ENCODE measurements at regions of chr11 and their contacts with region 1.

Region 1: DNA sequence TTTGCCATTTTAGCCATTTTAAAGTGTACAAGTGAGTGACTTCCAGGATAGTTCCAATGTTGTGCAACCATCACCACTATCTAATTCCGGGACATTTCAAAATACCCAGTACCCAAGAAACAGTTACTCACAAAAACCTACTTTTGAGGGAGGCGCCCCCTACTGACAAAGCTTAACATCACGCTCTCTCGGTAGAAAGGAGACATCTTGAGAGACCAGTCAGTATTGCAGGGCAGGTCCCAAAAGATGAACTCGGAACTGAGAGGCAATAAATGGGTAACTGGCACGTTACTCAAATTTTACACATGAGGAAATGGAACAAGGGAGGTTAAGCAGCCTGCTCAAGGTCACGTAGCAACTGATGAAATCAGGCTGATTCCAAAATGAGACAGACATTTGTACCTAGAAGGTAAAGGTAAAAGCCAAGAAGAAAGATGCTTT is 50.0 kb upstream of the POU2AF1 start:
- DNase-seq: peak; percentile 86
- ATAC-seq: peak; percentile 88
- H3K4me3 Mint-ChIP-seq: no peak overlapping the region
- H3K27ac Mint-ChIP-seq: no peak overlapping the region
- H3K4me1 Mint-ChIP-seq: no peaks in the 10 kb centered on the region
- H3K27me3 Mint-ChIP-seq: no peaks in the 10 kb centered on the region

Region 2: DNA sequence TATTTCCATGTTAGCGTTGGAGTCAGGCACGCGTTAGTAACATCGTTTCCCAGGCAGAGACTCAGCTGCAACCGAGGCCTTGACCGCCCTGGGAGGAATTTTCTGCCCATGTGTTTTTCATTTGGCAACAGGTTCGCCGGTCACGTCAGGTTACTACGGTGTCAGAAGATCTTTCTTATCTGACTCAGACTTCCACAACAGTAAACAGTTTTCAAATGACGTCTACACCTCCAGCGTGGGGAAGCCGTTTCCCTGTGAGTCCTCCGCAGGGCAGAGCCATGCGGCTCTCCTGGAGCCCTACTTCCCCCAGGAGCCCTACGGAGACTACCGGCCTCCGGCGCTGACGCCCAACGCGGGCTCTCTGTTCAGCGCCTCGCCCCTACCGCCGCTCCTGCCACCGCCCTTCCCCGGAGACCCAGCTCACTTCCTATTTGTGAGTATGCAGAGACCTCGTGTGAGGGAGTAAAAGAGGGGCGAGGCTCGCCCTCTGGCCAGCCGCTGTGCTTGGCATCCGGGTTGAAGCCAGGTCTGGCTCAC is 145.1 kb before region 1 on chr11:
- CTCF ChIA-PET with region 1: interaction called, 322 read pairs
- POLR2A ChIA-PET with region 1: no interaction called
- intact Hi-C with region 1: loop called (anchors 1 kb)
- DNase-seq: no peak
- ATAC-seq: no peak
- H3K4me3 Mint-ChIP-seq: no peak overlapping the region
- H3K27ac Mint-ChIP-seq: no peak overlapping the region
- H3K4me1 Mint-ChIP-seq: peaks cover 3% of the 10 kb centered on the region
- H3K27me3 Mint-ChIP-seq: no peaks in the 10 kb centered on the region

Region 3: GRCh38 chr11:111299101-111300026 is 129.7 kb before region 1 on chr11:
- CTCF ChIA-PET with region 1: interaction called, 13 read pairs
- POLR2A ChIA-PET with region 1: no interaction called
- intact Hi-C with region 1: no loop called
- DNase-seq: peak; percentile 11
- ATAC-seq: peak; percentile 42
- H3K4me3 Mint-ChIP-seq: no peak overlapping the region
- H3K27ac Mint-ChIP-seq: no peak overlapping the region
- H3K4me1 Mint-ChIP-seq: peaks cover 3% of the 10 kb centered on the region
- H3K27me3 Mint-ChIP-seq: peaks cover 34% of the 10 kb centered on the region

Region 4: GRCh38 chr11:111359223-111360149 is 69.6 kb before region 1 on chr11:
- CTCF ChIA-PET with region 1: interaction called, 17 read pairs
- POLR2A ChIA-PET with region 1: no interaction called
- intact Hi-C with region 1: loop called in 1 of 2 experiments (anchors 1 kb)
- DNase-seq: peak; percentile 39
- ATAC-seq: peak; percentile 83
- H3K4me3 Mint-ChIP-seq: no peak overlapping the region
- H3K27ac Mint-ChIP-seq: no peak overlapping the region
- H3K4me1 Mint-ChIP-seq: peaks cover 2% of the 10 kb centered on the region
- H3K27me3 Mint-ChIP-seq: no peaks in the 10 kb centered on the region

Region 5: DNA sequence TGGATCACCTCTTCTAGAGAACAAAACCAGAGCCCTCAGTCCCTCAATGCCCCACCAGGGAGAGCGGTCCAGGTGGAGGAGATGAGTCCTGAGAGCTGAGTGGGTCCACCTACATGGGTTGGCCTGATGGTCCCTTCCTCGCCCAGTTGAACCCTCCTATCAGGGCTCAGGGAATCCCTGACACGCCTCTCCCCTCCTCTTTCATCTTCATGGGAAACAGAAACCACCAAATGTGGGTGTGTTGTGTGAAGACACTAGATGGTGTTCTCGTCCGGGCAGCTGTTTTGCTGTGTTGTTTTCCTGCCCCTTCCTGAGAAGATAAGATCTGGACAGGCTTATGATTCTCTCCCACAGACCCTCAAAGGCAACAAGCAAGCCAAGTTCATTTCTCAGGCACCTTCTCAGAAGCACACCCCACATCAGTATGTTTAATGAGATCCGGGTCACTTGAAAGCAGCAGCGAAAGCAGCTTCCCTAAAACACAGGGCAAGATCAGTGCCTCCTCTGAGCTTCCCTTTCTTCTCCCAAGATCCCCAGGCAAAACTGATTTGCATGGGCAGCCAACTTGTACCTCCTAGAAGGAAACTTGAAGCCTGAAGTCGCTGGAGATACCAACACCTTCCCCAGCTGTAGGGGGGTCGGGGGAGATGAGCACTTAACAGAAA is 14.7 kb before region 1 on chr11:
- CTCF ChIA-PET with region 1: interaction called, 68 read pairs
- POLR2A ChIA-PET with region 1: no interaction called
- intact Hi-C with region 1: no loop called
- DNase-seq: peak; percentile 40
- ATAC-seq: peak; percentile 25
- H3K4me3 Mint-ChIP-seq: peak overlapping the region; percentile 43
- H3K27ac Mint-ChIP-seq: peak overlapping the region; percentile 87
- H3K4me1 Mint-ChIP-seq: peaks cover 56% of the 10 kb centered on the region
- H3K27me3 Mint-ChIP-seq: no peaks in the 10 kb centered on the region

Region 6: DNA sequence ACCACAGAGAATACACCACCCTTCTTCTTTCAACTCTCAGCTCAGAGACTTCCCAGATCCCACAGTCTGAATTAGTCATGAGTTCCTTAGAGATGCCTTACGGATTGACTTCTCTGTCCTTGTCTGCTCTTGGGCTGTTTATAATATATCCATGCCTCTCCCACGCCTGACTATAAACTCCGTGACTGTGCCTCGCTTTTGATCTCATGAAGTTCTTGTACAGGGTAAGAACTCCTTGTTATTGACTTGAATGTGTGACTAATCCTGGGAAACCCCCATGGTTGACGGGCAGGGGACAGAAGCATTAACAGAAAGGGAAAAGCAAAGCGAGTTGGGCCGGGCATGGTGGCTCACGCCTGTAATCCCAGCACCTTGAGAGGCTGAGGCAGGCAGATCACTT is 12.4 kb after region 1 on chr11:
- CTCF ChIA-PET with region 1: interaction called, 29 read pairs
- POLR2A ChIA-PET with region 1: no interaction called
- intact Hi-C with region 1: no loop called
- DNase-seq: peak; percentile 42
- ATAC-seq: peak; percentile 28
- H3K4me3 Mint-ChIP-seq: no peak overlapping the region
- H3K27ac Mint-ChIP-seq: no peak overlapping the region
- H3K4me1 Mint-ChIP-seq: peaks cover 25% of the 10 kb centered on the region
- H3K27me3 Mint-ChIP-seq: no peaks in the 10 kb centered on the region

Region 7: GRCh38 chr11:111870886-111871692 is 442.0 kb after region 1 on chr11 and contains the start of gene ALG9:
- CTCF ChIA-PET with region 1: no interaction called
- POLR2A ChIA-PET with region 1: no interaction called
- intact Hi-C with region 1: no loop called
- DNase-seq: peak; percentile 94
- ATAC-seq: peak; percentile 87
- H3K4me3 Mint-ChIP-seq: peak within 1 kb of the TSS; percentile 95
- H3K27ac Mint-ChIP-seq: peak within 1 kb of the TSS; percentile 90
- H3K4me1 Mint-ChIP-seq: peaks cover 26% of the 10 kb centered on the region
- H3K27me3 Mint-ChIP-seq: no peaks in the 10 kb centered on the region
- total RNA-seq, gene ALG9: 30.4 to 41.2 TPM